ENCODE measurements at regions of chrX and their contacts with region 1.

Region 1: GRCh38 chrX:16870095-16870860 is at the start of gene RBBP7:
- DNase-seq: peak; percentile 97
- total RNA-seq, gene RBBP7: 117 TPM

Region 2: DNA sequence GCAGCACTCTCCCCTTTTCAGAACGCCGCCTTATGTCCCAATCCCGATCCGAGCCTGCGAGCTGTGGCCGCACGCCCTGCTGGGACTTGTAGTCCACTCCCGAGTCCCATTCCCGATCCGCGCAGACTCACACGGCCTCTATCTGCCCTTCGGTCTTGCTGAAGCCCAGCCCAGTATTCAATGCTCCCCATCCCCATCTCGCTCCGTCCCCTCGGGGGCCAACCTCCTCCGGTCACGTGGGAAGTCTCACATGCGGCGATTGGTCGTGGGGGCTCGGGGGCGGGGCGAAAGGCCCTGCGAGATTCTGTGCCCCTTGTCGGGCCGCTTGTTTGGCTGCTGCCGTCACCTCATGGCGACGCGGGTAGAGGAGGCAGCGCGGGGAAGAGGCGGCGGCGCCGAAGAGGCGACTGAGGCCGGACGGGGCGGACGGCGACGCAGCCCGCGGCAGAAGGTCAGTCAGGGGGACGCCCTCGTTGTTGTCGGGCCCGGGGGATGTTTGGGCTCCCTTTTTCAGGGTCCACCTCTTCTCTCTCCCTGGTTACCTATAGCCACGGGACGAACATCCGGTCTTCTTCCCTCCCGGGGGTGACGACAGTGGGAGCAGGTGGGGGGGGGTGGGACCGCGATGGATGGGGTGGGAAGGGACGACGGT is 84.0 kb before region 1 on chrX and contains the start of gene TXLNG:
- intact Hi-C with region 1: loop called (anchors 5 kb)
- DNase-seq: peak; percentile 99
- total RNA-seq, gene TXLNG: 6.8 TPM